Psoas muscle (tissue), 8 donors: ENCODE measurements at regions of chr9 and their contacts with region 1.

Region 1: GRCh38 chr9:134348404-134349155 is 22.3 kb downstream of the RXRA start:
- DNase-seq: no peak
- ATAC-seq: peak in 3 of 4 donors; percentile 25 to 53 (median 31)
- H3K4me3 ChIP-seq: no peak overlapping the region
- H3K27ac ChIP-seq: peak overlapping the region; percentile 50
- H3K4me1 ChIP-seq: peaks cover 100% of the 10 kb centered on the region
- H3K27me3 ChIP-seq: no peaks in the 10 kb centered on the region
- CTCF ChIP-seq: no peak

Region 2: GRCh38 chr9:134365791-134366688 is 17.5 kb after region 1 on chr9:
- intact Hi-C with region 1: loop called in 1 of 2 experiments (anchors 2 kb)
- DNase-seq: peak; percentile 94 to 96
- ATAC-seq: peak; percentile 77 to 82 (median 78)
- H3K4me3 ChIP-seq: peak overlapping the region; percentile 49
- H3K27ac ChIP-seq: peak overlapping the region; percentile 91
- H3K4me1 ChIP-seq: peaks cover 83% of the 10 kb centered on the region
- H3K27me3 ChIP-seq: no peaks in the 10 kb centered on the region
- CTCF ChIP-seq: no peak